Sciatic nerve (tissue), 2 donors: ENCODE measurements at regions of chr6 and their contacts with region 1.

Region 1: GRCh38 chr6:36682328-36683144 is 4.0 kb downstream of the CDKN1A start:
- DNase-seq: peak; percentile 60
- ATAC-seq: no peak

Region 2: DNA sequence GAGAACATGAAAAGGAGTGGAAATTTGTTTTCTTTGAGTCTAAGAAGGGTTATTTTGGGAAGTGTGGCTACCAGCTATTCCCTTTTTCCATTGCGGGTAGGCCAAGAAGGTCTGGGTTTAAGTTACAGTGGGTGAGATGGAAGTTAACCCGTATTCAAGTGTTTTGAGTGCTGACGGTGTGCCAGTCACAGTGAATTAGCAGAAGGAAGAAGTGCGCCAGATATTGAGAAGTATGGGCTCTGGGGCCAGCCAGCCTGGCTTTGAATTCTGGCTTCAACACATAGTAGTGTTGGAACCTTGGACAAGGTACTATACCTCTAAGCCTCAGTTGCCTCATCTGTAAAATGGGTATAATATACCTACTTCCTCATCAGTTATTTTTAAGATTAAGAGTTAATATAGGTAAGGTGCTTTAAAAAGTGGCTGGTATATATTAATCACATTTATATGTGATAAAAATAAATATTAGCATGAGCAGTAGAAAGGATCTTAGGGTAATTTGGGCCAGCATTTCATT is 1406.7 kb before region 1 on chr6:
- intact Hi-C with region 1: no loop called
- DNase-seq: no peak
- ATAC-seq: no peak

Region 3: GRCh38 chr6:36623547-36624459 is 58.7 kb before region 1 on chr6:
- intact Hi-C with region 1: loop called (anchors 5 kb)
- DNase-seq: peak; percentile 94
- ATAC-seq: peak; percentile 78

Region 4: GRCh38 chr6:36743538-36744303 is 61.2 kb after region 1 on chr6:
- intact Hi-C with region 1: no loop called
- DNase-seq: no peak
- ATAC-seq: no peak

Region 5: DNA sequence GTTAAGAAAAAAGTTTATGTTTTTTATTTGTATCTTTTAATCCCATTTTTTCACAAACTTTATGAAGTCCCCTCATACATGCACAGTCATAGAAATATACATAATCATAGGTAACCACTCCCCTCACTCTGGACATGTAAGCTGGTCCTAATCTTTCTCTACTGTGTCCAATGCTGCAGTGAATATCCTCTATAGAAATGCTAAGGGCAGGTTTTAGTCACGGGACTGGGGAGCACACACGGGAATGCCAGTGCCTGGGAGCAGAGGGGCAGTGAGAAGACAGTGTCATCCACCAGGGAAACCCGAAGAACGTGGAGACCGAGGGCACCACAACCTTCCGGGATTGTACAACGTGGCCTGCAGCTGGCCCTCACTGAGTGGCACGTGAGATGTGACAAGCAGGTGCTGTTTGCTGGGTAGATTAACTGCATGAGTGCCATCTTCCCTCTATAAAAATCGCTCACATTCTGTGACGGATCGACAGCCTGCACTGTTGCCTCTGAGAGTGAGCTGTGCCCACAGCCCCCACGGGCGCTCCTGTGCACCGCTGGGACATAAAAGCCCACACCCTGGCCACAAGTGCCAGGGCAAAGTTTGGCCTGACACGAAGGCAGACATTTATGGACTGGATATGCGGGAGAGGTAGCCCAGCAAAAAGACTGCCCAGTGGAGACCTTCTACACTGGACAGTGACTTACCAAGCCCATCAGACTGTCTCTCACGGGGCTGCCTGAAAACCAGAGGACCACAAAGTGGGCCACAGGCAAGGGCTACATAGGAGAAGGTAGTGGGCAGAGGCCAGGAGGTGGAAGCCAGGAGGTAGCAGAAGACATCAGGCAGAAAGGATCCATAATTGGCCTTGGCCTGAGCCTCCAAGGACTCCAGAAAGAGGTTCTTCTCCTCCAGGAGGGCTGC is 386.1 kb after region 1 on chr6:
- intact Hi-C with region 1: no loop called
- DNase-seq: no peak
- ATAC-seq: no peak